ENCODE measurements at regions of chr6 and their contacts with region 1.

Region 1: GRCh38 chr6:89080542-89081422 is at the start of gene PNRC1:
- DNase-seq: peak; percentile 100
- H3K4me3 ChIP-seq: peak within 1 kb of the TSS; percentile 47 to 100 (median 96)
- H3K27ac ChIP-seq: peak within 1 kb of the TSS; percentile 90 to 100 (median 100)
- H3K27me3 ChIP-seq: no peaks in the 10 kb centered on the region
- CTCF ChIP-seq: peak in 19 of 56 donors; percentile 0 to 43 (median 17)
- total RNA-seq, gene PNRC1: 135 to 273 (median 176) TPM

Region 2: DNA sequence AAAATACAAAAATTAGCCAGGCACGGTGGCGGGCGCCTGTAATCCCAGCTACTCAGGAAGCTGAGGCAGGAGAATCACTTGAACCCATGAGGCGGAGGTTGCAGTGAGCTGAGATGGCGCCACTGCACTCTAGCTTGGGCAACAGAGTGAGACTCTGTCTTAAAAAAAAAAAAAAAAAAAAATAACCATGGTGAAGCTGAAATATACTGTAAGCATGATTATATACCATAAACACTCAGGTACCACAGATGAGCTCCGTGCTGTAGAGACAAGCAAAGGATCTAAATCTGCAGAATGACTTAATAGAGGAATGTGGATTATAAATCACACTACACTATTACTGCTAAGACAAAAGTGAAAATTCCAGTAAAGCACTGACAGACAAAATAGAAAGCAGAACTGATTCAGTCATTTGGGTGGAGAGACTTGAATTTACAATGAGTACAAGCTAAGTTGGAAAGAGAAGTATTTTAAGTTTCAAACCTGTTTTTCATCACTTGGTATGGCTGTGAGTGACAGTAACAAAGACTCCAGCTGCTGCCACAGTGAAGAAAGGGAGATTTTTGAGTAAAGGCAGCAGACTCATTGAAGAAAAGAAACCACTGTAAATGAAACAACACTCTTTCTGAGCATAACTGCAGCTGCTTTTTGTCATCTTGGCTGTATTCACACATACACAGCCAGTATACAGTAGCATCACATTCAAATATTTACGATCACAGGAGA is 439.4 kb before region 1 on chr6:
- intact Hi-C with region 1: no loop called
- DNase-seq: no peak
- H3K4me3 ChIP-seq: no peak overlapping the region
- H3K27ac ChIP-seq: no peak overlapping the region
- H3K27me3 ChIP-seq: no peaks in the 10 kb centered on the region
- CTCF ChIP-seq: no peak

Region 3: GRCh38 chr6:88963139-88964090 is 117.4 kb before region 1 on chr6 and contains the start of gene RNGTT:
- intact Hi-C with region 1: loop called in 1 of 2 experiments (anchors 5 kb)
- DNase-seq: peak; percentile 96 to 99 (median 98)
- H3K4me3 ChIP-seq: peak within 1 kb of the TSS; percentile 62 to 100 (median 93)
- H3K27ac ChIP-seq: peak within 1 kb of the TSS in 57 of 59 donors; percentile 19 to 92 (median 81)
- H3K27me3 ChIP-seq: no peaks in the 10 kb centered on the region
- CTCF ChIP-seq: peak in 31 of 56 donors; percentile 7 to 61 (median 32)
- total RNA-seq, gene RNGTT: 18.7 to 32.0 (median 25.2) TPM

Region 4: GRCh38 chr6:89035252-89036106 is 45.3 kb before region 1 on chr6:
- intact Hi-C with region 1: loop called in 1 of 2 experiments (anchors 2 kb)
- DNase-seq: peak in 6 of 10 donors; percentile 41 to 73 (median 67)
- H3K4me3 ChIP-seq: peak overlapping the region in 23 of 59 donors; percentile 1 to 36 (median 15)
- H3K27ac ChIP-seq: peak overlapping the region in 56 of 59 donors; percentile 2 to 87 (median 58)
- H3K27me3 ChIP-seq: no peaks in the 10 kb centered on the region
- CTCF ChIP-seq: no peak

Region 5: DNA sequence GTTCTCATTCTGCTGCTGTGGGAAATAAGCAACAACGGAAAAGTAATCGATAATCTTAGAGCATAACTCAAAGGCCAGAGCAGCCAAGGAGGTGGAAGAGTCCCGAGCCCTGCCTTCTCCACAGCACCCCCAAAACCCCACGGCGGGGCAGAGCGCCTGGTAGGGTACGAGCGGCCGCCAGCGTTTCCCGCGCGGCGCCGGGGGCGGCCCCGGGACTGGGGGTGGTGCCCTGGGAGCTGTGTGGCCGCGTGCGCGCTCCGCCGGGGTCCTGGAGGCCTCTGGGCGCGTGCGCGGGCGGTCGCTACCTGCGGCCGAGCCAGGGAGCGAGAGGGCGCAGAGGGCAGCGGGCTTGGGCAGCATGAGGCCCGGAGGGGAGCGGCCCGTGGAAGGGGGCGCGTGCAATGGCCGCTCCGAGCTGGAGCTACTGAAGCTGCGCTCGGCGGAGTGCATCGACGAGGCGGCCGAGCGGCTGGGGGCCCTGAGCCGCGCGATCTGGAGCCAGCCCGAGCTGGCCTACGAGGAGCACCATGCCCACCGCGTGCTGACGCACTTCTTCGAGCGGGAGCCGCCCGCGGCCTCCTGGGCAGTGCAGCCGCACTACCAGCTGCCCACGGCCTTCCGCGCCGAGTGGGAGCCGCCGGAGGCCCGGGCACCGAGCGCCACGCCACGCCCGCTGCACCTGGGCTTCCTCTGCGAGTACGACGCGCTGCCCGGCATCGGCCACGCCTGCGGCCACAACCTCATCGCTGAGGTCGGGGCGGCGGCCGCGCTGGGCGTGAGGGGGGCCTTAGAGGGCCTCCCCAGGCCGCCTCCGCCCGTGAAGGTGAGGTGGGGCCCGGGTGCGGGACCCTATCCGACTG is 65.2 kb after region 1 on chr6 and contains the start of gene PM20D2:
- intact Hi-C with region 1: loop called in 1 of 2 experiments (anchors 5 kb)
- DNase-seq: peak in 8 of 10 donors; percentile 37 to 77 (median 60)
- H3K4me3 ChIP-seq: peak within 1 kb of the TSS; percentile 59 to 96 (median 86)
- H3K27ac ChIP-seq: peak within 1 kb of the TSS in 56 of 59 donors; percentile 23 to 94 (median 76)
- H3K27me3 ChIP-seq: no peaks in the 10 kb centered on the region
- CTCF ChIP-seq: peak in 2 of 56 donors; percentile 4 to 20
- total RNA-seq, gene PM20D2: 4.7 to 11.2 (median 8.2) TPM

Region 6: DNA sequence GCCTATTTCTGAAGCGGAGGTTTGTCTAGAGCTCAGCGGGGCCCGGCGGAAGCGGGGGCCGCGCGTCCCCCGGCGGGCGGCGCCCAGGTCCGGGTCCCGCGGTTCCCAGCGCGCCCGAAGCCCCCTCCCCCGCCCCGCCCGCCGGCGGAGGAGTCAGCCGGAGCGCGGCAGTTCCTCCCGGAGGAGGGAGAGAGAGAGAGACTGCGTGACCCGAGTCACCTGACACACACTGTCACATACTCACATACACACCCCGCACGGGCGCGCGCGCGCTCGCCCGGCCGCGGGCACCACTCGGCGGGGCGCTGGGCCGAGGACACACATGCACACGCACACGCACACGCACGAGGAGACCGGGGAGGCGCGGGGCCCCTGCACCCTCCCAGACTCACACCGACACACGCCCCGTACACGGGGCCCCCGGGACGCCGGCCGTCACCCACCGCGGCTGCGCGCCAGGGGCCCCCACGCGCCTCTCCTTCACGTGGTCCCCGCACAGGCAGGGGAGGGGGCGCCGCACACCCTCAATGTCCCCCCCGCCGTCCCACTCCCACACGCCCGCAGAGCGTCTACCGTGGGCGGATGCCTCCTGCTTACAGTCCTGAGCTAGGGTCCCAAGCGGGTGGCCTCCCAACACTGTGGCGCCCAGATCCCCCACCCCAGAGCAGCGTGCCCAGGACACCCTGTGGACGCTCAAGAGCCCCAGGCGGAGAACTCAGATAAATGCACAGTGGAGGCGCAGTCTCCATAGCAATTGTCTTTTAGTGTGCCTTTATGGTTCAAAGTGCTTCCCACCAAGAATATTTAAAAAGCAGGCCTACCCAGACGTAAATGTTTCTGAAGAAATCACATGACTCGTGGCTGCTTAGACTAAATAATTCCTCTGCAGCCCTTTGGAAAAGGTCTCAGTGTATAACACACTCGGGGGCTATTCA is 331.6 kb after region 1 on chr6 and contains the start of gene RRAGD:
- intact Hi-C with region 1: loop called (anchors 2 to 5 kb)
- DNase-seq: peak; percentile 63 to 92 (median 86)
- H3K4me3 ChIP-seq: peak within 1 kb of the TSS; percentile 65 to 98 (median 88)
- H3K27ac ChIP-seq: peak within 1 kb of the TSS; percentile 35 to 98 (median 91)
- H3K27me3 ChIP-seq: no peaks in the 10 kb centered on the region
- CTCF ChIP-seq: peak in 16 of 56 donors; percentile 3 to 33 (median 19)
- total RNA-seq, gene RRAGD: 31.7 to 65.1 (median 45.2) TPM

Region 7: GRCh38 chr6:89438248-89438647 is 357.5 kb after region 1 on chr6:
- intact Hi-C with region 1: no loop called
- DNase-seq: no peak
- H3K4me3 ChIP-seq: no peak overlapping the region
- H3K27ac ChIP-seq: no peak overlapping the region
- H3K27me3 ChIP-seq: no peaks in the 10 kb centered on the region
- CTCF ChIP-seq: no peak

Measured in dorsolateral prefrontal cortex (tissue), 120 donors.